BJ (cell line): ENCODE measurements at regions of chr4 and their contacts with region 1.

Region 1: GRCh38 chr4:78775303-78776030 is 683 bp upstream of the BMP2K start:
- DNase-seq: no peak
- H3K4me3 ChIP-seq: peak overlapping the region; percentile 59
- H3K27me3 ChIP-seq: no peaks in the 10 kb centered on the region
- CTCF ChIP-seq: no peak

Region 2: DNA sequence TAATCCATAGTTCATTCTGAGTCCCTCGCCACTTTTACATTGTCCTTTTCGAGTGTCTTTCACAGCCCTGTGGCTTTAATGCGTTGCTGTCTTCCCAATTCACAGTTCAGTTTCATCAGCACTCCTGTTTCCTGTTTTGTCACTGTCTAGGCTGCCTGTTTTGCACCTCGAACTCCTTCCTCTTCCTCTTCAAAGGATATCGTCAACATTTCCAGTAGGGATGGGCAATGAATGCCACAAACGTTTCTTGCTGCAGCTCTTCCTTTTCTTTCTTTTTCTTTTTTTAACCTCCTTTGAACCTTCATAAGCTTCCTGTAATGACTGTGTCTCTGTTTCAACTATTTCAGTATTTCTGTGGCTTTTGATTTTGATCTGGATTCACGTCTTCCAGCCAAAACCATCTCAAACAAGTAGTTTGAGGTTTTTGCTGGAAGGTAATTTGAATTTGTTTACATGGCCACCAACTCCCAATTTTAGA is 118.5 kb before region 1 on chr4:
- CTCF ChIA-PET with region 1: interaction called, 6 read pairs
- POLR2A ChIA-PET with region 1: interaction called, 16 read pairs
- DNase-seq: no peak
- H3K4me3 ChIP-seq: no peak overlapping the region
- H3K27me3 ChIP-seq: no peaks in the 10 kb centered on the region
- CTCF ChIP-seq: no peak

Region 3: DNA sequence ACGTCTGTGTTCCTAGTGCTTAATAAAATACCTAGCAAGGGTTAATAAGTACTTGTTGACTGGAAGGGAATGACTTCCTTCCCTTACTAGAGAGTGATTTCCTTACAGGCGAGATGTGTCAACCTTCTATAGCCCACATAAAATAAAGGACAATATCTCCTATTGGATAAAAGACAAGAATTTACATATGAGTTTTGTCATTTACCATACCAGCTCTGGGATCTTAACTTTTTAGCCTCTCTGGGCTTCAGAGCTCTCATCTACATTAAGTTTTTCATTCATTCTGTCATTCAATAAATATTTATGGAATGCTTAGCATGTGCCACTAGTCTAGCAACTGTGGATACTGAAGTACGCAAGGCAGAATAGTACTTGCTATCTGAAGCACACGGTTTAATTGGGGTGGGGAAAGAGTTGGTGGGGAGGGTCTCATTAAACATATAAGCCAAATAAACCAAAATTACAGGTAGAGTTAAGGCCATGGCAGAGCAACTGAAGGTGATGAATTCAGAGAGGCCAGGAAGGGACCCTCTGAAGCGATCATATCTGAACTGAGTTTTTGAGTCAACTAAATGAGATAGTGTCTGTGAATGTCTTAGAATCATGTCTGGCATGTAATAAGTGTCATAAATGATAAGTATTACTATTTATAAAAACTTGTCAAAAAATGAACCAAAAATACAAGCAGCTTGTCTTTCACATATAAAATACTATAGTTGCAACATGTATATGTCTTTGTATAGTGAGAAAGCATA is 91.0 kb before region 1 on chr4:
- CTCF ChIA-PET with region 1: no interaction called
- POLR2A ChIA-PET with region 1: interaction called, 13 read pairs
- DNase-seq: peak; percentile 9
- H3K4me3 ChIP-seq: no peak overlapping the region
- H3K27me3 ChIP-seq: no peaks in the 10 kb centered on the region
- CTCF ChIP-seq: no peak

Region 4: DNA sequence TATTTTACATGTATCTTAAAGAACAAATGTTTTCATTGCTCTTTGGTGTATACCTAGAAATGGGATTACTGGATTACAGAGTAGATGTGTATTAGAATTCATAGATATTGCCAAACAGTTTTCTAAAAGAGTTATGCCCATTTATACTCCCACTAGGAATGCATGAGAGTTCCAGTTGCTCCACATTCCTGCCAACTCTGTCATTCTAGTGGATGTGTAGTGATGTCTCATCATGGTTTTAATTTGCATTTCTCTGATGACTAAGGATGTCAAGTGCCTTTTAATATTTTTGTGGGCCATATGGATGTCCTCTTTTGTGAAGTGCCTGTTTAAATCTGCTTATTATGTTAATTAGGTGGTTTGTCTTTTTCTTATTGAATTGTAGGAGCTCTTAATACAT is 64.9 kb before region 1 on chr4:
- CTCF ChIA-PET with region 1: no interaction called
- POLR2A ChIA-PET with region 1: no interaction called
- DNase-seq: no peak
- H3K4me3 ChIP-seq: no peak overlapping the region
- H3K27me3 ChIP-seq: no peaks in the 10 kb centered on the region
- CTCF ChIP-seq: no peak

Region 5: DNA sequence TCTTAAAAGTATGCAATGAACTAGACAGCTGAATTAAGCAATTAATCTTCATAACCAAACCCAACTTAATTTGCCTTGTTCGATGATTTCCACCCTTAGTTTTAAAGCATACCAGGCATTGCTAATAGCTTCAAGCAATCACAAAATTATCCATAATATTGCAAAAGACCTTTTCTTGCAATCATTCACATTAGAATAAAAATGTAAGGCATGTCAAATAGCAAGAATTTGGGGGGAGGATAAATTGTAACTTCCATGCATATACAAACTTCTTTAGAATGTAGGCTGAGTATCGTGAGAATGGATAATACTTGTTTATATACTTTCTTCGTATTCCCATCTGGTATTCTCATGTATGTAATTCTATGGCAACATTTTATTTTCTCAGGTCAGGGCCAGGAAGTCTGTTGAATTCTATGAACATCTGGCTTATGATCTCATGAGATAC is 28.0 kb before region 1 on chr4:
- CTCF ChIA-PET with region 1: interaction called, 3 read pairs
- POLR2A ChIA-PET with region 1: interaction called, 13 read pairs
- DNase-seq: peak; percentile 65
- H3K4me3 ChIP-seq: no peak overlapping the region
- H3K27me3 ChIP-seq: no peaks in the 10 kb centered on the region
- CTCF ChIP-seq: no peak